ENCODE measurements at regions of chr22 and their contacts with region 1.

Region 1: DNA sequence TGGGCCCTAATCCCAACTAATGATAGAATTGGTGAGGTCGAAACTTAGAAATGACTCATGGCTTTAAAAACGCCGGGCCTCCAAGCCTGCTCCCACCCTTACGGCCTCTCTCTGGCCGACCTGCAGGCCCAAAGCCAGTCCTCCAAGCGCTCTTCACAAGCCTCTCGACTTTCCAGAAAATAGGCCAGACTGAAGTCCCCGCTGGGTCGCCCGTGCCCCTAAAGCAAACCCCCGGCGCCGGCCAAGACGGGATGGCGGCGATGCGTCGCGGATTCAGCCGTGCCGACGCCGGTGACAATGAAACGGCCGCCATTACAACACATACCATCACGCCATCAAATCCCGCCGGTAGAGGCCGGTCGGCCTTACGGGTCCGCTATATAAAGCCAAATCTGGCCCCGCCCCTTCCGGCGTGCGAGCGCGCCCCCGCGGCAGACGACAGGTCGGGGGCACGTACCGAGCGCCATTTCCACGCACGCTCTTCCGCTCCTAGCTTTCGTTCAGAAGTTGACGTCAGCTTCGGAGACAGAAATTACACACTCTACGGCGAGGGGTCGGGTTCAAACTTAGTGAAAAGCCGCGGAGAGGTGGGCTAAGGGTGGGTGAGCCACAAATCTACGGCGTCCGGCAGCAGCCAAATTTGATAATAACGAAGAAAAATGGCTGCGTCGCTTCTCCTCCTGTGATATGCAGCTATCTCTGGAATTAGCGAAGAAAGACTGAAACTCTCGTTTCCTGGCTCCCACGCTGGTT is at the start of gene RPL3:
- DNase-seq: peak; percentile 96 to 98 (median 97)
- ATAC-seq: peak; percentile 87 to 94 (median 90)
- H3K4me3 ChIP-seq: peak within 1 kb of the TSS; percentile 58 to 93 (median 78)
- H3K27ac ChIP-seq: peak within 1 kb of the TSS; percentile 81 to 100 (median 96)
- H3K4me1 ChIP-seq: peaks cover 22 to 50% (median 42%) of the 10 kb centered on the region in 12 donors
- H3K27me3 ChIP-seq: no peaks in the 10 kb centered on the region
- CTCF ChIP-seq: peak in 6 of 12 donors; percentile 9 to 39 (median 27)
- POLR2A ChIP-seq: peak in 1 of 2 donors; percentile 79
- total RNA-seq, gene RPL3: 237 to 911 (median 336) TPM

Region 2: DNA sequence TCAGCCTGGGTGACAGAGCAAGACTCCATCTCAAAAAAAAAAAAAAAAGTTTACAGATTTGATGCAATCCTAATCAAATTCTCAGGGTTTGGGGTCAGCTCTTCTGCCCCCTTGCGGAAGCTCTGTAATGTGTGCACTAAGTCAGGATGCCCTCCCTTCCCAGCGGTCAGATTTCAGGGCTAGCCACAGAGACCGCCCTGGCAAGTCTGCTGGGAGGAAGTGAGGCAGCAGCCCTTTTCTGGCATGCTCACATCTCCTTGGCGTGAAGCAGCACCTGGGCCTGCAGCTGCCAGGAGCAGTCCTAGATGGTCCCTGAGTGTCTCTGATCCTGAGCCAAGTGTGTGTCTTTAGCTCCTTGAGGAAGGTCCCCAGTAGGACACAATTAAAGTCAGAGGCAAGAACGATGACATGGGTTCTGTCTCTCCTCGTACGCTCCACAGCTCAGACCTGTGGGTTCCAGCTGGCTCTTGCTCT is 316.2 kb before region 1 on chr22:
- intact Hi-C with region 1: loop called in 2 of 10 experiments (anchors 10 kb)
- DNase-seq: peak; percentile 67 to 81 (median 75)
- ATAC-seq: peak; percentile 81 to 94 (median 92)
- H3K4me3 ChIP-seq: no peak overlapping the region
- H3K27ac ChIP-seq: no peak overlapping the region
- H3K4me1 ChIP-seq: peaks cover 0 to 12% (median 1%) of the 10 kb centered on the region in 12 donors
- H3K27me3 ChIP-seq: peaks cover 0 to 5% (median 0%) of the 10 kb centered on the region in 9 donors
- CTCF ChIP-seq: peak; percentile 63 to 86 (median 75)
- POLR2A ChIP-seq: no peak

Region 3: GRCh38 chr22:39152511-39153219 is 166.8 kb before region 1 on chr22 and contains the start of gene CBX7:
- intact Hi-C with region 1: loop called in 6 of 10 experiments (anchors 1 to 5 kb)
- DNase-seq: peak; percentile 95 to 97 (median 96)
- ATAC-seq: peak; percentile 72 to 93 (median 92)
- H3K4me3 ChIP-seq: peak within 1 kb of the TSS; percentile 71 to 99 (median 92)
- H3K27ac ChIP-seq: peak within 1 kb of the TSS; percentile 82 to 99 (median 94)
- H3K4me1 ChIP-seq: peaks cover 0 to 54% (median 33%) of the 10 kb centered on the region in 12 donors
- H3K27me3 ChIP-seq: peaks cover 0 to 15% (median 0%) of the 10 kb centered on the region in 9 donors
- CTCF ChIP-seq: no peak
- POLR2A ChIP-seq: peak; percentile 80 to 95
- total RNA-seq, gene CBX7: 48.3 to 187 (median 75.0) TPM

Region 4: GRCh38 chr22:39170825-39171622 is 148.4 kb before region 1 on chr22:
- intact Hi-C with region 1: loop called in 3 of 10 experiments (anchors 1 to 2 kb)
- DNase-seq: peak; percentile 81 to 93 (median 84)
- ATAC-seq: peak; percentile 76 to 87 (median 83)
- H3K4me3 ChIP-seq: peak overlapping the region in 4 of 12 donors; percentile 1 to 18 (median 10)
- H3K27ac ChIP-seq: peak overlapping the region in 3 of 12 donors; percentile 25 to 42 (median 40)
- H3K4me1 ChIP-seq: peaks cover 33 to 56% (median 47%) of the 10 kb centered on the region in 12 donors
- H3K27me3 ChIP-seq: no peaks in the 10 kb centered on the region
- CTCF ChIP-seq: peak; percentile 94 to 99 (median 96)
- POLR2A ChIP-seq: no peak

Region 5: DNA sequence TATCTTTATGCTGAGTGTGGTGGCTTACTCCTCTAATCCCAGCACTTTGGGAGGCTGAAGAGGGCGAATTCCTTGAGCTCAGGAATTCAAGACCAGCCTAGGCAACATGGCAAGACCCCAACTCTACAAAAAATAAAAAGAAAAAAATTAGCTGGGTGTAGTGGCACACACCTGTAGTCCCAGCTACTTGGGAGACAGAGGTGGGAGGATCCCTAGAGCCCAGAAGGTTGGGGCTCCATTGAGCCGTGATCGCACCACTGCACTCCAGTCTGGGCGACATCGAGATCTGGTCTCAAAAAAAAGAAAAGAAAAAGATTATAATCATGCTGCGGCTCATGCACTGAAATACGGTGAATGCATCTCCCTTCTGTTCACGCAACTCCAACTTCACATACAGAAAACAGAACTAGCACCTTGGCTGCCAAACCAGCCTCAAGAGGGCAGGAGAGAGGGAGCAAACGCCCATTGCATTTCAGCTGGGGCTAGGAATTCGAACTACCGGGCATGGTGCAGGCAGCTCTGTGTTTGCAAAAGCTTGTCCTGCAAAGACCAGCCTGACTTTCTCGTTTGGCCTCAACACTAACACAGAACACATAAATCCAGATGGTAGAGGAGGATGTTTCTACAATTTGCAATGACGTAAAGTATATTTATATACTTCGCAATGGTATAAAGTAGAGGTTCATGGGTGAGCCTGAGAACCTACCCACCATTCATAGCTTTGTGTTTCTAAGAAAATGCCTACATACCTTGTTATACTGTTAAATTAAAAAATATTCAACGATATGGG is 24.0 kb after region 1 on chr22:
- intact Hi-C with region 1: loop called in 1 of 10 experiments (anchors 1 kb)
- DNase-seq: peak in 4 of 5 donors; percentile 44 to 60 (median 58)
- ATAC-seq: peak in 3 of 4 donors; percentile 72 to 83 (median 80)
- H3K4me3 ChIP-seq: no peak overlapping the region
- H3K27ac ChIP-seq: no peak overlapping the region
- H3K4me1 ChIP-seq: peaks cover 0 to under 1% (median 0%) of the 10 kb centered on the region in 12 donors
- H3K27me3 ChIP-seq: peaks cover 0 to 3% (median 0%) of the 10 kb centered on the region in 9 donors
- CTCF ChIP-seq: peak; percentile 49 to 80 (median 64)
- POLR2A ChIP-seq: no peak

Measured in heart left ventricle (tissue), 16 donors.